A673 (cell line): ENCODE measurements at regions of chr18 and their contacts with region 1.

Region 1: GRCh38 chr18:33184958-33185357 is 255.6 kb downstream of the CCDC178 start:
- DNase-seq: no peak
- H3K4me3 ChIP-seq: no peak overlapping the region
- H3K27ac ChIP-seq: no peak overlapping the region
- H3K4me1 ChIP-seq: no peaks in the 10 kb centered on the region
- H3K27me3 ChIP-seq: peaks cover 4% of the 10 kb centered on the region
- CTCF ChIP-seq: no peak

Region 2: DNA sequence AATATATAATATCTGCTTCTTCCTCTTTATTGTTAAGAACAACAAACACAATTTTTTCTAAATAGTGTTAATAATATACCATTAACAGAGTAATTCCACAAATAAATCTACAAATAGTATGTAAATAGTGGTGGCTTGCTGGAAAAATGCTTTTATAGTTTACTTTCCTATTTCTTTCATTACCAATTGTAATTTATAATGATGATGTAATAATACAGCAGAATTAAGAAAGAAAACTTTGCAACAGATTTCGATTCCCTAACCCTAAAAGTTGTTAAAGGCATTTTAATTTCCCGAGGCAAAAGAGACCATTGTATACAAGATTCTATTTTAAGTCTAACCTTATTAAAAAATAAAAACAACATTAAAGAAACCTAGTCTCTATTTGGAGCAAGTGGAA is 52.3 kb before region 1 on chr18:
- CTCF ChIA-PET with region 1: no interaction called
- POLR2A ChIA-PET with region 1: no interaction called
- intact Hi-C with region 1: loop called (anchors 5 kb)
- DNase-seq: no peak
- H3K4me3 ChIP-seq: no peak overlapping the region
- H3K27ac ChIP-seq: no peak overlapping the region
- H3K4me1 ChIP-seq: no peaks in the 10 kb centered on the region
- H3K27me3 ChIP-seq: no peaks in the 10 kb centered on the region
- CTCF ChIP-seq: no peak